ENCODE measurements at regions of chr1 and their contacts with region 1.

Region 1: GRCh38 chr1:48109390-48110013 is 112.3 kb upstream of the TRABD2B start:
- DNase-seq: peak in 1 of 5 donors; percentile 15
- ATAC-seq: peak in 3 of 4 donors; percentile 51 to 63 (median 51)
- H3K4me3 ChIP-seq: no peak overlapping the region
- H3K27ac ChIP-seq: no peak overlapping the region
- H3K4me1 ChIP-seq: no peaks in the 10 kb centered on the region
- H3K27me3 ChIP-seq: peaks cover 0 to 4% (median 0%) of the 10 kb centered on the region in 9 donors
- CTCF ChIP-seq: peak; percentile 72 to 88 (median 84)
- POLR2A ChIP-seq: no peak

Region 2: GRCh38 chr1:47951545-47952234 is 157.8 kb before region 1 on chr1:
- intact Hi-C with region 1: no loop called
- DNase-seq: no peak
- ATAC-seq: no peak
- H3K4me3 ChIP-seq: no peak overlapping the region
- H3K27ac ChIP-seq: no peak overlapping the region
- H3K4me1 ChIP-seq: no peaks in the 10 kb centered on the region
- H3K27me3 ChIP-seq: no peaks in the 10 kb centered on the region
- CTCF ChIP-seq: no peak
- POLR2A ChIP-seq: no peak

Region 3: GRCh38 chr1:48202030-48202752 is 92.7 kb after region 1 on chr1:
- intact Hi-C with region 1: loop called (anchors 1 to 2 kb)
- DNase-seq: peak; percentile 47 to 73 (median 62)
- ATAC-seq: peak; percentile 37 to 81 (median 67)
- H3K4me3 ChIP-seq: no peak overlapping the region
- H3K27ac ChIP-seq: no peak overlapping the region
- H3K4me1 ChIP-seq: no peaks in the 10 kb centered on the region
- H3K27me3 ChIP-seq: peaks cover 0 to 6% (median 0%) of the 10 kb centered on the region in 9 donors
- CTCF ChIP-seq: peak; percentile 75 to 88 (median 84)
- POLR2A ChIP-seq: no peak

Region 4: GRCh38 chr1:48236716-48237470 is 127.4 kb after region 1 on chr1:
- intact Hi-C with region 1: loop called in 1 of 10 experiments (anchors 10 kb)
- DNase-seq: no peak
- ATAC-seq: peak in 2 of 4 donors; percentile 41 to 53
- H3K4me3 ChIP-seq: no peak overlapping the region
- H3K27ac ChIP-seq: no peak overlapping the region
- H3K4me1 ChIP-seq: peaks cover 0 to 3% (median 0%) of the 10 kb centered on the region in 12 donors
- H3K27me3 ChIP-seq: no peaks in the 10 kb centered on the region
- CTCF ChIP-seq: peak; percentile 23 to 64 (median 50)
- POLR2A ChIP-seq: no peak

Region 5: DNA sequence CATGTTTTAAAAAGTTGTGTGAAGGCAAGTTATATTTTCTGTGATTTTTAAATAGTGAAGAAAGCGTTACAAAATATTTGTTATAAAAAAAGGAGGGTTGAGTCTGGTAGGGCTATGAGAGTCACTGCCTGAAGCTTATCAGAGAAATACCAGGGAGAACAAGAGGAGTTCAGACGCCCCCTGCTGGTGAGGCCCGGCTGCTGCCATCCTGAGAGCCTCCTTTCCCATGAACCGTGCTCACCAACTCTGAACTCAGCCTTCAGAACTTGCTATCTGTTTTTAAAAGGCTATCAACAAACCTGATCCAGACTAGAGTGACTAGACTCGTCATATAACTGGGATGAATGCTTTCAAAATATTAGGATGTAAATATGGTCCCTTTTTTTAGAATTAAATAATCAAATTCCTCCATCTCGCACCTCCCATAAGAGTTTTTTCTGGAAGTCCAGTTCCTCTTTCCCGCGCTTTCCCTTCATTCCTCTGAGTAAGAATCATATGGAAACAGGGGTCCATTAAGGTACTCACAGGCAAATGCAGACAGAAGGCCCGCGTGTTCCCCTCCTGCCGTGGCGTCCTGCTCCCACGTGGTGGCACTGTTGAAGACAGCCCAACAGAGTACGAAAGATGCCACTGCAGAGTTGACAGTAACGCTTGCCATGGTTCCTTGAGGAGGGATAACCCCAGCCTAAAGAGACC is 388.7 kb after region 1 on chr1:
- intact Hi-C with region 1: loop called in 9 of 10 experiments (anchors 2 to 10 kb)
- DNase-seq: peak; percentile 68 to 82 (median 80)
- ATAC-seq: peak; percentile 81 to 93 (median 90)
- H3K4me3 ChIP-seq: peak overlapping the region in 2 of 12 donors; percentile 13 to 14
- H3K27ac ChIP-seq: no peak overlapping the region
- H3K4me1 ChIP-seq: peaks cover 0 to 9% (median 2%) of the 10 kb centered on the region in 12 donors
- H3K27me3 ChIP-seq: no peaks in the 10 kb centered on the region
- CTCF ChIP-seq: peak; percentile 81 to 98 (median 91)
- POLR2A ChIP-seq: no peak

Region 6: GRCh38 chr1:48697066-48697707 is 587.7 kb after region 1 on chr1:
- intact Hi-C with region 1: loop called in 3 of 10 experiments (anchors 10 kb)
- DNase-seq: peak in 4 of 5 donors; percentile 29 to 68 (median 31)
- ATAC-seq: peak in 1 of 4 donors; percentile 35
- H3K4me3 ChIP-seq: no peak overlapping the region
- H3K27ac ChIP-seq: no peak overlapping the region
- H3K4me1 ChIP-seq: no peaks in the 10 kb centered on the region
- H3K27me3 ChIP-seq: peaks cover 0 to 42% (median under 1%) of the 10 kb centered on the region in 9 donors
- CTCF ChIP-seq: peak; percentile 77 to 91 (median 89)
- POLR2A ChIP-seq: no peak

Measured in heart left ventricle (tissue), 16 donors.